HAP-1 (cell line): ENCODE measurements at regions of chr11 and their contacts with region 1.

Region 1: DNA sequence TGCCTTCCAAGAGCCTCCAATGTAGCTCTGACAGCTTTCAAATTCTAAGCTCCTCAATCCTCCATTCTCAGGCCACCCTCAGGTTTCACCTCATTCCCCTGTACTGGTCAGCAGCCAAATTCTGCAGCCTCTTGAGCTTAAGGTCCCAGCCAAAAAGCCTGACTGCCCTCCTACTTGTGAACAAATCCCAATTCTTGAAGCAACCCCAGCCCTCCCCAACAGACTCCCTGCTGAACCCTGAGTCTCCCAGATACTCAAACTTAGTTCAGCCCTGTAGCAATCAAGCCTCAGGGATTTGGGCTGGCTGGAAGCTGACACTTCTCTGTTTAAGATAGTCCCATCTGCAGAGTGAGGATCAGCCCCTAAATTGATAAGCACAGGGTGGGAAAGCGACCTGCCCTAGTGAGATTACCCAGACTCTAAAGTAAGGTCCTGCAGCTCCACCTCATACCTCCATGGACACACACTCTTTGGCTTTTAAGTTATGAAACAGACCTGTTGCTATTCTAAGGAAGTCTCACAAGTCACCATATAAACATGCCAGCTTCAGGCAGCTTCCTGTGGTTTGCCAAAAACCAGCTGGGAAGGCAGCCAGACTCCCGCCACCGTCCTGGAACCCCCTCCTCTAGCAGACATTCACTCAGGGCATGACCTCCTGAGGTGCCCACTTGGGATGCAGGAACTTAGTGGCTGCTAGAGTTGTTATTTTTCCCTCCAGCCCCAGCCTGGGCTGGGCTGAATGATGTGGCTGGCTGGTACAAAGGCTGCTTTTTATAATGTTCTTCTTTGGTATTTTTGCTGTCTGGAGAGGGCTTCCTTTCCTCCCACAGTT is 82.5 kb upstream of the PICALM start:
- DNase-seq: no peak
- H3K4me3 ChIP-seq: no peak overlapping the region
- H3K4me1 ChIP-seq: no peaks in the 10 kb centered on the region
- H3K27me3 ChIP-seq: no peaks in the 10 kb centered on the region

Region 2: DNA sequence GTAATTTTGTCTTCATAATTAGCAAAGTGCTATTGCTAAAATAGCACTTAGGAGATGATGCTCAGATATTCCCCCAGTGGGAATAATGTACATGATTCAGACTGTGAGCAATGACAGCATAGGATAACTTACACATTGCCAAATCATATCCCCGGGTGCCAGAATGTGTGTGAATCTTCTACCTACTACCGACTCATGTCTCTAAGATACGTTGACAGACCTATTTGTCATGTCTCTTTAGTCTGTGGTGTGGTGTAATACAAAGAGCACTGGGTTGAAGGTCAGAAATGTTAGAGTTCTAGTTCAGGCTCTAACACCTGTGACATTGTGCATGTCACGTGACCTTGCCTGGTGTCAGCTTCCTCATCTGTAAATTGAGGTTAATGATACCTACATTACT is 51.5 kb before region 1 on chr11:
- in situ Hi-C with region 1: loop called (anchors 10 kb)
- DNase-seq: no peak
- H3K4me3 ChIP-seq: no peak overlapping the region
- H3K4me1 ChIP-seq: no peaks in the 10 kb centered on the region
- H3K27me3 ChIP-seq: no peaks in the 10 kb centered on the region

Region 3: GRCh38 chr11:86483940-86484794 is 332.8 kb after region 1 on chr11:
- in situ Hi-C with region 1: no loop called
- DNase-seq: peak; percentile 40 to 71
- H3K4me3 ChIP-seq: no peak overlapping the region
- H3K4me1 ChIP-seq: peaks cover 7% of the 10 kb centered on the region
- H3K27me3 ChIP-seq: no peaks in the 10 kb centered on the region